A549 (cell line): ENCODE measurements at regions of chr5 and their contacts with region 1.

Region 1: GRCh38 chr5:72366324-72366976 is 46.3 kb downstream of the PTCD2 start:
- DNase-seq: peak; percentile 52 to 76
- ATAC-seq: peak; percentile 94 to 95
- H3K4me3 ChIP-seq: no peak overlapping the region
- H3K27ac ChIP-seq: peak overlapping the region; percentile 59 to 81
- H3K4me1 ChIP-seq: peaks cover 29% of the 10 kb centered on the region
- CTCF ChIP-seq: peak; percentile 89
- EP300 ChIP-seq: no peak
- POLR2A ChIP-seq: no peak
- RAD21 ChIP-seq: peak; percentile 91 to 93

Region 2: GRCh38 chr5:72101828-72102227 is 264.6 kb before region 1 on chr5:
- CTCF ChIA-PET with region 1: no interaction called
- POLR2A ChIA-PET with region 1: no interaction called
- DNase-seq: no peak
- ATAC-seq: no peak
- H3K4me3 ChIP-seq: no peak overlapping the region
- H3K27ac ChIP-seq: peak overlapping the region in 1 of 2 experiments; percentile 29; a peak in 1 of 6 replicates
- H3K4me1 ChIP-seq: peaks cover 14% of the 10 kb centered on the region; the same call in 2 of the 3 replicates
- CTCF ChIP-seq: no peak
- EP300 ChIP-seq: no peak
- POLR2A ChIP-seq: no peak
- RAD21 ChIP-seq: no peak

Region 3: GRCh38 chr5:72166070-72166979 is 200.1 kb before region 1 on chr5:
- CTCF ChIA-PET with region 1: no interaction called
- POLR2A ChIA-PET with region 1: no interaction called
- DNase-seq: no peak
- ATAC-seq: peak in 1 of 2 experiments; percentile 32; a peak in 3 of 6 replicates
- H3K4me3 ChIP-seq: no peak overlapping the region
- H3K27ac ChIP-seq: no peak overlapping the region
- H3K4me1 ChIP-seq: 0 out of 3 replicates have a peak, but pooled peaks cover 2% of the 10 kb centered on the region
- CTCF ChIP-seq: no peak
- EP300 ChIP-seq: no peak
- POLR2A ChIP-seq: no peak
- RAD21 ChIP-seq: no peak

Region 4: DNA sequence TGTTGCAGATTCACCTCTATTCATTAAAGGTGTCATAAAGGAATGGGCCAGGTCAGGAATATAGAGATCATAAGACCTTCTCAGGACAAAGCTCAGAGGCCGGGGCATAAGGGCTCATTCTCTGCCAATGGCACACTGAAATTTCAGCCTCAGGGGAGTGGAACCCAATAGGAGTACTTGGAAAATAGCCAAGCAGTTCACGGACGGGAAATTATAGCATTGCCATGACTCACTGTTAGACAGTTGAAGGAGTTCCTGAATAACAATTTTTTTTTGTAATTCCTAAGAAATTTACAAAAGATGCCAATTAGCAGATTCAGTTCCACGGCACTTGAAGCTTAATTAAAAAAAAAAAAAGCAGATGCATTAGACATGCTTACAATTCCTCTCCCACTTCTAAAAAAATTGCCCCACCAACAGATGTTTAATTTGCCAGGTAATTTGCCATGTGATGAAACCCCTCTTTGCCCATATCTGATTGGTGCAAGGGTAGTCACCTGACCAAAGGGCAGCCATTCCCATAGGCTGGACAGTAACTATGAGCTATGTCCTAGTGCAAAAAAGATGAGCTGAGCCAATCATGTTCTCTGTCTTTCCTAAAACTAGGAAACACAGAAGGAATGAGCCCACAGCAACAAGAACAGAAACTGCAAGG is 12.3 kb after region 1 on chr5:
- CTCF ChIA-PET with region 1: interaction called, 33 read pairs
- POLR2A ChIA-PET with region 1: no interaction called
- DNase-seq: peak; percentile 54 to 59
- ATAC-seq: peak; percentile 63 to 75; a peak in 4 of 6 replicates
- H3K4me3 ChIP-seq: no peak overlapping the region
- H3K27ac ChIP-seq: peak overlapping the region; percentile 40 to 64
- H3K4me1 ChIP-seq: peaks cover 37% of the 10 kb centered on the region
- CTCF ChIP-seq: no peak
- EP300 ChIP-seq: no peak
- POLR2A ChIP-seq: no peak
- RAD21 ChIP-seq: no peak

Region 5: DNA sequence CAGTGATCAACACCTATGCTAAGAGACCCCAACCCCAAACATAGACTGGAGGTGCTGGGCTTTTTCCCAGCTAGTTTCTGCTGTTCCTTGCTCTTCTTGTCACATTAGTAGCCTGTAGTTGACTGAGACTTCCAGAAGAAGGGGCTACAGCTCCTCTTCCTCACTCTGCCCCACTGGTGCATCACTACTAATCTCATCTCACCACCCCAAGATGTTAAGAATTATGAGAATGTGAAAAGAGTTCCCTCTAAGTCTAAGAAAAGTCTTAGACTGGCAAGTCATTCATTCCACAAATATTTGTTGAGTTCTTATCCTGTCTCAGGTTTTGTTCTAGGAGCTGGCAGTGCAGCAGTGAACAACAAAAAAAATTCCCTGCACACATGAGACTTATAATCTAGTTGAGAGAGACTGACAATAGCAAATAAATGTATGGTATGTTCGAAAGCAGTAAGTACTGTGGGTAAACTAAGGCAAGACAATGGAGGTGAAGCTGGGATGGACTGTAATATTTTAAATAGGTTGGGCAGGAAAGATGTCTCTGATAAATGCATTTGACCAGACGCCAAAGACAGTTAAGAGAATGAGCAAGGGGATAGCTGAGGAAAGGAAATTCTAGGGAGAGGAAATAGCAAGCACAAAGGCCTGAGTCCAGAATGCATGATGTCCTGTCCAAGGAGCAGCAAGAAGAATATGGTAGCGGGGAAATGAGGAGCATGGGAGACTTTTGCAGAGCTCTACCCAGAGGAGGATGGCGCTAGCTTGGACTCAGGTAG is 46.0 kb after region 1 on chr5:
- CTCF ChIA-PET with region 1: interaction called, 15 read pairs
- POLR2A ChIA-PET with region 1: no interaction called
- DNase-seq: no peak
- ATAC-seq: peak; percentile 37 to 73; a peak in 4 of 6 replicates
- H3K4me3 ChIP-seq: no peak overlapping the region
- H3K27ac ChIP-seq: peak overlapping the region; percentile 54 to 79
- H3K4me1 ChIP-seq: peaks cover 36% of the 10 kb centered on the region
- CTCF ChIP-seq: peak; percentile 18; the same call in 2 of the 3 replicates
- EP300 ChIP-seq: no peak
- POLR2A ChIP-seq: no peak
- RAD21 ChIP-seq: peak; percentile 44 to 45; a peak in 4 of 5 replicates

Region 6: DNA sequence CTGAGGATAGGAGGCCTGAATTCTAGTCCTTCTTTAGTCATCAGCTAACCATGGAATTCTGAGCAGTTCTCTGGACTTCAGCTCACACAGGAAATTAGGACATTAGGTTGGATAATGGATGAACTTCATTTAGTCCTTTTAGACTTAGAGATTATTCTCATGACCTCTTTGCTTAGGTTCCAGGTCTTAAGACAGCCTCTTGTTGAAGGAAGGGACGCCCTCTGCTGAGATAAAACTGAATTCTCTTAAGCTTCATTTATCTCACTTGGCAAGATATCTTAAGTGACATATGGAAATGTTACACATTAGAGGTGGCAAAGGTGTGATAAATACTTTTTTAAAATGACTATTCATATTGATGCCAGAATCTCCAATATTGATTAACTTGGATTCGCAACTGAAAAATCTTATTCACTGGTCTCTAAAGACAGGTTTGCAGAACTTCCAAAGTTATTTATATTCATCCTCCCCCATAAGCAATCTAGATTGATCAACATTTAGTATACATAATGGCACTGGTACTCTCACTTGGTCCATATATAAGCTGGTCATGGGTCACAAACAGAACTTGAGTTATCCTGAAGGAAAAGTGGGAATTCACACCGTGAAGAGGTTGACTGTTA is 157.6 kb after region 1 on chr5:
- CTCF ChIA-PET with region 1: interaction called, 34 read pairs
- POLR2A ChIA-PET with region 1: interaction called, 4 read pairs
- DNase-seq: peak in 1 of 2 experiments; percentile 83
- ATAC-seq: peak in 1 of 2 experiments; percentile 74; a peak in 2 of 6 replicates
- H3K4me3 ChIP-seq: no peak overlapping the region
- H3K27ac ChIP-seq: no peak overlapping the region
- H3K4me1 ChIP-seq: no peaks in the 10 kb centered on the region
- CTCF ChIP-seq: peak; percentile 56
- EP300 ChIP-seq: no peak
- POLR2A ChIP-seq: no peak
- RAD21 ChIP-seq: peak; percentile 73 to 86

Region 7: GRCh38 chr5:72788866-72789505 is 422.5 kb after region 1 on chr5:
- CTCF ChIA-PET with region 1: no interaction called
- POLR2A ChIA-PET with region 1: no interaction called
- DNase-seq: peak; percentile 71 to 77
- ATAC-seq: peak; percentile 56 to 94; a peak in 4 of 6 replicates
- H3K4me3 ChIP-seq: no peak overlapping the region
- H3K27ac ChIP-seq: peak overlapping the region; percentile 23 to 54; a peak in 4 of 6 replicates
- H3K4me1 ChIP-seq: peaks cover 29% of the 10 kb centered on the region
- CTCF ChIP-seq: no peak
- EP300 ChIP-seq: no peak
- POLR2A ChIP-seq: no peak
- RAD21 ChIP-seq: no peak

Region 8: GRCh38 chr5:72816311-72817145 is 450.1 kb after region 1 on chr5 and contains the start of gene TNPO1:
- CTCF ChIA-PET with region 1: interaction called, 33 read pairs
- POLR2A ChIA-PET with region 1: interaction called, 10 read pairs
- DNase-seq: peak; percentile 76 to 92
- ATAC-seq: peak; percentile 89 to 93
- H3K4me3 ChIP-seq: peak within 1 kb of the TSS; percentile 82
- H3K27ac ChIP-seq: peak within 1 kb of the TSS; percentile 96 to 98
- H3K4me1 ChIP-seq: peaks cover 36% of the 10 kb centered on the region
- CTCF ChIP-seq: no peak
- EP300 ChIP-seq: no peak
- POLR2A ChIP-seq: peak; percentile 85
- RAD21 ChIP-seq: peak in 1 of 2 experiments; percentile 1; a peak in 1 of 5 replicates
- polyA plus RNA-seq, gene TNPO1: 286 and 350 TPM in 2 replicates